Panc1 (cell line): ENCODE measurements at regions of chr3 and their contacts with region 1.

Region 1: DNA sequence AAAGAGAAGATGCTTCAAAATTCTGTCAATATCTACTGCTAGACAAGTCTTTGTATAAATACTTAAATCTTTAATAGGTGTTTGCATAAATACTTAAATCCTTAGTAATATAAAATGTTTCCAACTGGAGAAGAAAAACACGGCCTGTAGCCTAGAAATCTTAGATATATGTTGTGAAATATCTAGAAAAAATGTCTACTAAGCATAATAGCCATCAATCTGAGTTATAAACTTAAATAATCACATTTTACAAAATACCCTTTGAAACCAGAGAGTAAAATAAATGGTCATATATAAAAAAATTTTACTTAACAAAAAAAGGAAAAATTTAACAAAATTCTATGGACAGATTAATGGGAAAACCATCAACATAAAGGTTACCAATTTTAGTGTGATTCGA is 73.9 kb downstream of the PLOD2 start:
- DNase-seq: no peak
- ATAC-seq: no peak
- H3K4me3 ChIP-seq: no peak overlapping the region
- H3K27ac ChIP-seq: no peak overlapping the region
- H3K4me1 ChIP-seq: no peaks in the 10 kb centered on the region
- H3K27me3 ChIP-seq: no peaks in the 10 kb centered on the region
- CTCF ChIP-seq: no peak

Region 2: DNA sequence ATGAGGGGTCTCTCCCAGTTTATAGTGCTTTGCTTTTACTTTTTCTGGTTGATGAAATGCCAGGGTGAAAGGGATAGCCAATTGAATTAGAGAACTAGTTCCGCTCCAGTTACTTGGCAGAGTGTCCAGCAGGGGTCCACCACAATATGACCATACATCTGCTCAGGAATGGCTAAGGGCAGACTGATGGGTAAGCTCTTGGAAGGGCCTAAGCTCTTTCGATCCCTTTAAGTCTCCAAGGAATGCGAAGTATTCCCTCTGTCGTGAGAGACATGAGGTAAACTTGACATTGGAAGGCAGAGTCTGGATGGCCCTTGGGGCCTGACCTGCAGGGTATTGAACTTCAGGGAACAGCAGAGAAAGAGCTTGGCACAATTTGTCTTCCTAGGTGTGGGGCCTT is 731.9 kb before region 1 on chr3:
- CTCF ChIA-PET with region 1: no interaction called
- POLR2A ChIA-PET with region 1: no interaction called
- in situ Hi-C with region 1: no loop called
- intact Hi-C with region 1: no loop called
- DNase-seq: no peak
- ATAC-seq: no peak
- H3K4me3 ChIP-seq: no peak overlapping the region
- H3K27ac ChIP-seq: no peak overlapping the region
- H3K4me1 ChIP-seq: no peaks in the 10 kb centered on the region
- H3K27me3 ChIP-seq: no peaks in the 10 kb centered on the region
- CTCF ChIP-seq: no peak

Region 3: GRCh38 chr3:146550743-146551510 is 463.8 kb after region 1 on chr3:
- CTCF ChIA-PET with region 1: no interaction called
- POLR2A ChIA-PET with region 1: interaction called, 22 read pairs
- in situ Hi-C with region 1: no loop called
- intact Hi-C with region 1: no loop called
- DNase-seq: no peak
- ATAC-seq: peak; percentile 71
- H3K4me3 ChIP-seq: no peak overlapping the region
- H3K27ac ChIP-seq: no peak overlapping the region; the same call in 1 of the 2 replicates
- H3K4me1 ChIP-seq: no peaks in the 10 kb centered on the region
- H3K27me3 ChIP-seq: no peaks in the 10 kb centered on the region; the same call in 1 of the 2 replicates
- CTCF ChIP-seq: no peak